CD4-positive, alpha-beta T cell (primary cell): ENCODE measurements at regions of chr4 and their contacts with region 1.

Region 1: GRCh38 chr4:21790438-21791029 is 158.0 kb downstream of the KCNIP4 start:
- DNase-seq: peak in 2 of 14 experiments; percentile 6 to 26
- ATAC-seq: no peak
- H3K4me3 ChIP-seq: no peak overlapping the region
- H3K4me3 Mint-ChIP-seq: no peak overlapping the region
- H3K27ac ChIP-seq: no peak overlapping the region
- H3K27ac Mint-ChIP-seq: no peak overlapping the region
- H3K4me1 ChIP-seq: no peaks in the 10 kb centered on the region
- H3K4me1 Mint-ChIP-seq: no peaks in the 10 kb centered on the region
- H3K27me3 ChIP-seq: no peaks in the 10 kb centered on the region
- H3K27me3 Mint-ChIP-seq: no peaks in the 10 kb centered on the region
- CTCF ChIP-seq: no peak

Region 2: GRCh38 chr4:22389240-22389870 is 598.8 kb after region 1 on chr4:
- CTCF ChIA-PET with region 1: interaction called, 5 read pairs
- POLR2A ChIA-PET with region 1: no interaction called
- intact Hi-C with region 1: loop called in 1 of 2 experiments (anchors 10 kb)
- DNase-seq: peak in 6 of 14 experiments; percentile 2 to 55 (median 38)
- ATAC-seq: no peak
- H3K4me3 ChIP-seq: no peak overlapping the region
- H3K4me3 Mint-ChIP-seq: no peak overlapping the region
- H3K27ac ChIP-seq: no peak overlapping the region
- H3K27ac Mint-ChIP-seq: no peak overlapping the region
- H3K4me1 ChIP-seq: no peaks in the 10 kb centered on the region
- H3K4me1 Mint-ChIP-seq: no peaks in the 10 kb centered on the region
- H3K27me3 ChIP-seq: no peaks in the 10 kb centered on the region
- H3K27me3 Mint-ChIP-seq: no peaks in the 10 kb centered on the region
- CTCF ChIP-seq: peak; percentile 34

Region 3: DNA sequence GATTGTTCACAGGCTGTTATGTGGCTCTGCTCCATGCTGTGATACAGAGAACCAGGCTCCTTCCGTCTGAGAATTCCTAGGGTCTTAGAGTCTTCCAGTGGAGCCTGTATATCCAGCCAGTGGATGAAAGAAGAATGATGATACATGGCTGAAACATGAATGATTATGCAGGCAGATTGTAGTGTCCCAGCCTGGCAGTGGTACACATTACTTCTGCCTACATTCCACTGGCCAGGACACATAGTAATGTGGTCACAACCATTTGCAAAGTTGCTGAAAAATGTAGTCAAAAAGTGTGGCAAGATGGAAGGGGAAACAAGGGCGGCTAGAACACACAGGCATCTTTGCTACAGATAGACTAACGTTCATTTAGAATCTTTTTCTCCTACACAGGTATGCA is 897.7 kb after region 1 on chr4:
- CTCF ChIA-PET with region 1: no interaction called
- POLR2A ChIA-PET with region 1: no interaction called
- intact Hi-C with region 1: loop called in 1 of 2 experiments (anchors 5 kb)
- DNase-seq: no peak
- ATAC-seq: no peak
- H3K4me3 ChIP-seq: no peak overlapping the region
- H3K4me3 Mint-ChIP-seq: no peak overlapping the region
- H3K27ac ChIP-seq: no peak overlapping the region
- H3K27ac Mint-ChIP-seq: no peak overlapping the region
- H3K4me1 ChIP-seq: peaks cover 3% of the 10 kb centered on the region
- H3K4me1 Mint-ChIP-seq: peaks cover 16% of the 10 kb centered on the region
- H3K27me3 ChIP-seq: no peaks in the 10 kb centered on the region
- H3K27me3 Mint-ChIP-seq: no peaks in the 10 kb centered on the region
- CTCF ChIP-seq: no peak